ENCODE measurements at regions of chr1 and their contacts with region 1.

Region 1: GRCh38 chr1:232630047-232630893 is at the start of gene SIPA1L2:
- DNase-seq: peak; percentile 86 to 92
- ATAC-seq: peak; percentile 85 to 89
- H3K4me3 ChIP-seq: peak within 1 kb of the TSS; percentile 79 to 94 (median 88)
- H3K27ac ChIP-seq: peak within 1 kb of the TSS; percentile 82 to 93 (median 92)
- H3K4me1 ChIP-seq: peaks cover 9 to 12% of the 10 kb centered on the region in 2 donors
- H3K27me3 ChIP-seq: no peaks in the 10 kb centered on the region
- CTCF ChIP-seq: peak in 4 of 5 experiments; percentile 13 to 53 (median 22)
- POLR2A ChIP-seq: peak; percentile 80 to 87
- total RNA-seq, gene SIPA1L2: 3.1 to 22.7 (median 3.9) TPM

Region 2: DNA sequence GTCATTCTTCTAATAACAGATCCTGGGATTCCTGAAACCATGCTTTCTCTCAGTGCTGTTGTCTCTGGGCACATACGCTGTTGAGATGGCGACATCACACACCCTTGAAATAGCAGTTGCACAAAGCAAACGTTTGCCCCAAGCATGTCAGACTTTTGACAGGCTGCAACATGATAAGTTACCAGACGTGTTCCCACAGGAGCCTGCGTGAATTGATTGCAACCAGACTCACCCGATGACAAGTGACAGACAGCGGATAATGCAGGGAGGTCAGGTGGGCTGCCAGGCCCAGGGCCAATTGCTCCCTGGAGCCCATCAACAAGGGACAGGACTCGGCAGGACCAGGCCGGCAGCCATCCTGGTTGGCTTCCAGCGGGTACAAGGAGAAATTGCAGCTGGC is 311.2 kb before region 1 on chr1:
- in situ Hi-C with region 1: no loop called
- intact Hi-C with region 1: loop called (anchors 10 kb)
- DNase-seq: peak; percentile 37 to 81
- ATAC-seq: peak; percentile 89 to 93
- H3K4me3 ChIP-seq: peak overlapping the region in 1 of 4 donors; percentile 18
- H3K27ac ChIP-seq: peak overlapping the region; percentile 46 to 71 (median 61)
- H3K4me1 ChIP-seq: peaks cover 9 to 11% of the 10 kb centered on the region in 2 donors
- H3K27me3 ChIP-seq: no peaks in the 10 kb centered on the region
- CTCF ChIP-seq: no peak
- POLR2A ChIP-seq: no peak

Region 3: GRCh38 chr1:232767305-232768074 is 137.2 kb after region 1 on chr1:
- in situ Hi-C with region 1: no loop called
- intact Hi-C with region 1: loop called (anchors 5 kb)
- DNase-seq: peak; percentile 48 to 82
- ATAC-seq: peak; percentile 91 to 96
- H3K4me3 ChIP-seq: no peak overlapping the region
- H3K27ac ChIP-seq: peak overlapping the region; percentile 52 to 77 (median 73)
- H3K4me1 ChIP-seq: peaks cover 12 to 17% of the 10 kb centered on the region in 2 donors
- H3K27me3 ChIP-seq: no peaks in the 10 kb centered on the region
- CTCF ChIP-seq: no peak
- POLR2A ChIP-seq: no peak

Region 4: GRCh38 chr1:232968965-232969364 is 338.7 kb after region 1 on chr1:
- in situ Hi-C with region 1: loop called in 2 of 4 experiments (anchors 25 kb)
- intact Hi-C with region 1: loop called (anchors 5 kb)
- DNase-seq: peak; percentile 87 to 91
- ATAC-seq: peak; percentile 87 to 88
- H3K4me3 ChIP-seq: no peak overlapping the region
- H3K27ac ChIP-seq: peak overlapping the region; percentile 74 to 81 (median 76)
- H3K4me1 ChIP-seq: peaks cover 34 to 40% of the 10 kb centered on the region in 2 donors
- H3K27me3 ChIP-seq: no peaks in the 10 kb centered on the region
- CTCF ChIP-seq: no peak
- POLR2A ChIP-seq: peak in 1 of 2 donors; percentile 18

Region 5: GRCh38 chr1:233172227-233172626 is 542.0 kb after region 1 on chr1:
- in situ Hi-C with region 1: loop called in 1 of 4 experiments (anchors 10 kb)
- intact Hi-C with region 1: loop called (anchors 5 kb)
- DNase-seq: no peak
- ATAC-seq: no peak
- H3K4me3 ChIP-seq: no peak overlapping the region
- H3K27ac ChIP-seq: no peak overlapping the region
- H3K4me1 ChIP-seq: no peaks in the 10 kb centered on the region
- H3K27me3 ChIP-seq: no peaks in the 10 kb centered on the region
- CTCF ChIP-seq: peak in 1 of 5 experiments; percentile 45
- POLR2A ChIP-seq: no peak

Measured in gastrocnemius medialis (tissue), 4 donors.